ENCODE measurements at regions of chr2 and their contacts with region 1.

Region 1: DNA sequence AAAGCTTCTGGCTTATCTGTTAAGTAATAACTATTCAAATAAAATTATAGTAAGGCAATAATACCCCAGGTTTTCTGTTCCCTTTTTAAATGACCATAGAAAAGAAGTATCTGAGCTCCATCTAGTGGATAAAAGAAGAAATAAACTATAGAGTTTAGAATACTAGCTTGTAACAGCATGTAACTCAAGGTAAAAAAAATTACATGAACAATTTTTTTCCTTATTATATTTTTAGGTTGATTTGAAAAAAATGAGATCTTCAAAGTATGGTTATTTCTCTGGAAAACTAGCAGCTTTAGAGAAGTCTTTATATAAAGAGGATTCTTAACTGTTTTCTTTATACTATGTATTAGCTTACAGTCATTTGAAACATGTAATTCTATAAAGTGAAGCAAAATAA is 58.1 kb downstream of the NCKAP1 start:
- DNase-seq: no peak
- H3K4me3 Mint-ChIP-seq: no peak overlapping the region
- H3K27ac Mint-ChIP-seq: no peak overlapping the region
- H3K4me1 Mint-ChIP-seq: no peaks in the 10 kb centered on the region
- H3K27me3 Mint-ChIP-seq: no peaks in the 10 kb centered on the region

Region 2: DNA sequence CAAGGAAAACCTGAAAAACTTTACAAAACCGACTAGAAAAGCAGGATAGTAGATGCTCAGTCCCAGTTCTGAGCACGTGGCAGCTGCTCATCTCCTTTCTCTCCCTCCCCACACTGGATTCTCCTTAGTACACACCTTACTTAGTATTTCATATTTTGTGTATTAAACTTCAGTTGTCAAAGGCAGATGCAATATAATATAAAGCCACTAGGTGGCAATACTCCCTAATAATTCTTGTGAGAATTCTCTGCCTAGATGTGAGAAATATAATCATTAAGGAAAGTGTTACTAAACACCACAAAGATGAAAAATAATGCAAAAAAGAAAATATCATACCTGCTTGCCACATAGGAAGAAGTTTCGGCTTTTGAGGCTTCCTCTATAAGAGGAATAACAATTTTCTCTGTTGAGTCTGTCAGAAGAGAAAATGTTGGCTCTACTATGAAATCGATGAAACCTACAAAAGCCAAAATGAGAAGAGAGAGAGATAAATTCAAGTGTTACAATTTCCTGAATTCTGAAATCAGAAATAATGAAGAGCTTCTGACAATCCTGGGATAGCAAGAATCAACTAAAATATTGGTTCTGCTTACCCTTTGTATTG is 793.9 kb before region 1 on chr2:
- CTCF ChIA-PET with region 1: interaction called, 21 read pairs
- POLR2A ChIA-PET with region 1: no interaction called
- intact Hi-C with region 1: loop called (anchors 1 kb)
- DNase-seq: no peak
- H3K4me3 Mint-ChIP-seq: no peak overlapping the region
- H3K27ac Mint-ChIP-seq: no peak overlapping the region
- H3K4me1 Mint-ChIP-seq: no peaks in the 10 kb centered on the region
- H3K27me3 Mint-ChIP-seq: peaks cover 5% of the 10 kb centered on the region

Region 3: GRCh38 chr2:182240862-182241371 is 739.2 kb before region 1 on chr2:
- CTCF ChIA-PET with region 1: no interaction called
- POLR2A ChIA-PET with region 1: no interaction called
- intact Hi-C with region 1: loop called (anchors 2 kb)
- DNase-seq: peak; percentile 28
- H3K4me3 Mint-ChIP-seq: no peak overlapping the region
- H3K27ac Mint-ChIP-seq: no peak overlapping the region
- H3K4me1 Mint-ChIP-seq: no peaks in the 10 kb centered on the region
- H3K27me3 Mint-ChIP-seq: no peaks in the 10 kb centered on the region

Region 4: DNA sequence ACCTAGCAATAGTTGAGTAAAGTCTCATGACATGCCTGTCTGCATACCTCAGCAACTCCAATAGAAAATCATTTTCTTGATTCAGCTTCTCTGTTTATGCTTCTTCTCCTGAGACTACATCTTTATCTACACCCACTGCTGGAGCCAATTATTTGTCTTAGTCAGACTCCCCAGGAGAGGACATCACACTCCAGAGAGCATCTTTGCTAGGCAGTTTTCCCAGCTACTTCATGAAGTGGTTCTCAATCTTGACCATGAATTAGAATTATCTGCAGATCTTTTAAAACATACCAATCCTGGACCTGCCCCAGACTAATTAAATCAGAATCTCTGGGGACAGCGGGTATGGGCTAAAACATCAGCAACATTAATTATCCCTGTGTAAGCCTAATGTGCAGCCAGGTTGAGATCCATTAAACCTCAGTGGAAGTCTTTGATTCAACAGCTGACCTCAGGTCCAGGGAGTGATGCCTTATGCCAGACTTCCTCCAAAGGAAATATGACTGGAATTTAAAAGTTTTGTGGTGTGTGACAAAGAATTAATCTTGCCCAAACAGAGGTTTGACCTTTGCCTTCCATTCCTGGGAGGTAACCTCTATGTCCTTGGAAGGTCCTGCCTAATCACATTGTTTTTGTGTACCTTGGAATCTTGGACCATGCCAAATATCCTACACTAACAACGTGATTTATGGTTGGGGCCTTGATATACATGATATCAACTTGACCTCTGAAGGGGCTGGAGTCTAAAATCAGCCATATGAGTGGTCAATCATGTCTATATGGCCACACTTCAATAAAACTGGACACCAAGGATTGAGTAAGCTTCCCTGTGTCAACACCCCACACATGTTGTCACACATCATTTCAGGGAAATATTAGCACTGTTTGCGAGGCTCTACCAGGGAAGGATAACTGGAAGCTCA is 363.4 kb before region 1 on chr2:
- CTCF ChIA-PET with region 1: no interaction called
- POLR2A ChIA-PET with region 1: no interaction called
- intact Hi-C with region 1: no loop called
- DNase-seq: no peak
- H3K4me3 Mint-ChIP-seq: no peak overlapping the region
- H3K27ac Mint-ChIP-seq: no peak overlapping the region
- H3K4me1 Mint-ChIP-seq: no peaks in the 10 kb centered on the region
- H3K27me3 Mint-ChIP-seq: no peaks in the 10 kb centered on the region

Region 5: DNA sequence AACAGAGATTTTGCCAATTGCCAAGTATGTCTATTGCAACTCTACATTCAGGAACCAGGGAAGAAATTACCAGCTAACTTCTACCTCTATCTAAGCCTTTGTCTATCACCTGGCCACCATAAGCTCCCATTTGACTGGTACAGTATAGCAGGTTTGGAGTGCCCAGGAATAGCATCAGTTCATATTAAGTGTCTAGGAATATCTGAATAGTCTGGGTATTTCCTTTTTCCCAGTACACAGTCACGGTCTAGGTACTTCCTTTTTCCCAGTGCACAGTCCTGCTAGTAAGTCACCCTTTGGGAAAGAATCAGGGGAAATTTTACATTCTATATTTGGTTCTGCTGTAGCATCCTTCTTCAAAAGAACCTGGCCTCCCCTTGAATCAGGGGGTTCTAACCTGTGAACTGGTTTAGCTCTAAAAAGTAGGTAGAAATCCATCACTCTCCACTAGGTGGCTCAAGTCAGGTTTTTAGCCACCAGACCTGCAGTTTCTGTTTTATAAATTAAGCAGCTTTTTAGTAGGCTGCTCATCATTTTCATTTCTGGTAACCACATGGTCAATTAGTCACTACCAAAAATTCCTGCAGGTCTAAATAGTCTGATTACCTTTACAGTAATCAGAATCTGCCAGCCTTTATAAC is 313.3 kb before region 1 on chr2:
- CTCF ChIA-PET with region 1: interaction called, 26 read pairs
- POLR2A ChIA-PET with region 1: no interaction called
- intact Hi-C with region 1: loop called (anchors 1 kb)
- DNase-seq: no peak
- H3K4me3 Mint-ChIP-seq: no peak overlapping the region
- H3K27ac Mint-ChIP-seq: no peak overlapping the region
- H3K4me1 Mint-ChIP-seq: peaks cover 4% of the 10 kb centered on the region
- H3K27me3 Mint-ChIP-seq: peaks cover 2% of the 10 kb centered on the region

Region 6: GRCh38 chr2:182763311-182763912 is 216.7 kb before region 1 on chr2:
- CTCF ChIA-PET with region 1: interaction called, 17 read pairs
- POLR2A ChIA-PET with region 1: no interaction called
- intact Hi-C with region 1: loop called (anchors 1 kb)
- DNase-seq: no peak
- H3K4me3 Mint-ChIP-seq: no peak overlapping the region
- H3K27ac Mint-ChIP-seq: no peak overlapping the region
- H3K4me1 Mint-ChIP-seq: peaks cover 3% of the 10 kb centered on the region
- H3K27me3 Mint-ChIP-seq: no peaks in the 10 kb centered on the region

Region 7: DNA sequence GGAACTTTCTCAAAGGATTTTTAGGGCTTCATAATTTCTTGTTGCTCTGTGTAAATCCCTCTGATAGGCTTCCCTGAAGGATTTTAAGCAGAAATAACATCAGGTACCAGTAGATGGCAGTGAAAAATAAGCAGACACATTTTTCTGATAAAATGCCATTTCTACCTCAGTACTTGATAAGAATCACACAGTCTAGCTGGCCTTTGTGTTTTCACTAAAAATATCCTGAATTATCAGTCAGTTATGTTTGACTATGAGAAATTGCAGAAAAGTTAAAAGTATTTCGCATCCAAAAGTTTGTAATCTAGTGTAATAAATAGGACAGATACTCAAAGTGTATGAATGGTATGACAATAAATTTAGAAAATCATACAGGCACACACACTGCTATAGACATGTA is 195.3 kb before region 1 on chr2:
- CTCF ChIA-PET with region 1: interaction called, 20 read pairs
- POLR2A ChIA-PET with region 1: no interaction called
- intact Hi-C with region 1: loop called (anchors 1 kb)
- DNase-seq: no peak
- H3K4me3 Mint-ChIP-seq: no peak overlapping the region
- H3K27ac Mint-ChIP-seq: no peak overlapping the region
- H3K4me1 Mint-ChIP-seq: no peaks in the 10 kb centered on the region
- H3K27me3 Mint-ChIP-seq: no peaks in the 10 kb centered on the region

Region 8: GRCh38 chr2:182907081-182907830 is 72.9 kb before region 1 on chr2:
- CTCF ChIA-PET with region 1: no interaction called
- POLR2A ChIA-PET with region 1: no interaction called
- intact Hi-C with region 1: no loop called
- DNase-seq: no peak
- H3K4me3 Mint-ChIP-seq: no peak overlapping the region
- H3K27ac Mint-ChIP-seq: no peak overlapping the region
- H3K4me1 Mint-ChIP-seq: no peaks in the 10 kb centered on the region
- H3K27me3 Mint-ChIP-seq: no peaks in the 10 kb centered on the region

Measured in activated CD4-positive, alpha-beta memory T cell treated with anti-CD3 and anti-CD28 coated beads for 36 hours (primary cell).